ENCODE measurements at regions of chr12 and their contacts with region 1.

Region 1: GRCh38 chr12:69738351-69739286 is at the start of gene RAB3IP:
- DNase-seq: peak; percentile 58 to 96 (median 92)

Region 2: GRCh38 chr12:69585189-69586062 is 153.2 kb before region 1 on chr12 and contains the start of gene CCT2:
- intact Hi-C with region 1: loop called (anchors 10 kb)
- DNase-seq: peak; percentile 96 to 99 (median 99)

Region 3: GRCh38 chr12:69821456-69822159 is 83.0 kb after region 1 on chr12:
- intact Hi-C with region 1: loop called (anchors 2 kb)
- DNase-seq: peak in 27 of 42 donors; percentile 8 to 70 (median 37)

Measured in head of caudate nucleus (tissue), 42 donors.